ENCODE measurements at regions of chr1 and their contacts with region 1.

Region 1: GRCh38 chr1:248873409-248873992 is 14.6 kb upstream of the ZNF692 start:
- DNase-seq: peak; percentile 99
- H3K4me3 ChIP-seq: peak overlapping the region; percentile 49 to 81 (median 62)
- H3K27ac ChIP-seq: peak overlapping the region; percentile 76
- H3K4me1 ChIP-seq: no peaks in the 10 kb centered on the region
- H3K27me3 ChIP-seq: peaks cover 0 to 3% of the 10 kb centered on the region in 2 experiments
- CTCF ChIP-seq: peak in 1 of 2 donors; percentile 9
- POLR2A ChIP-seq: no peak

Region 2: DNA sequence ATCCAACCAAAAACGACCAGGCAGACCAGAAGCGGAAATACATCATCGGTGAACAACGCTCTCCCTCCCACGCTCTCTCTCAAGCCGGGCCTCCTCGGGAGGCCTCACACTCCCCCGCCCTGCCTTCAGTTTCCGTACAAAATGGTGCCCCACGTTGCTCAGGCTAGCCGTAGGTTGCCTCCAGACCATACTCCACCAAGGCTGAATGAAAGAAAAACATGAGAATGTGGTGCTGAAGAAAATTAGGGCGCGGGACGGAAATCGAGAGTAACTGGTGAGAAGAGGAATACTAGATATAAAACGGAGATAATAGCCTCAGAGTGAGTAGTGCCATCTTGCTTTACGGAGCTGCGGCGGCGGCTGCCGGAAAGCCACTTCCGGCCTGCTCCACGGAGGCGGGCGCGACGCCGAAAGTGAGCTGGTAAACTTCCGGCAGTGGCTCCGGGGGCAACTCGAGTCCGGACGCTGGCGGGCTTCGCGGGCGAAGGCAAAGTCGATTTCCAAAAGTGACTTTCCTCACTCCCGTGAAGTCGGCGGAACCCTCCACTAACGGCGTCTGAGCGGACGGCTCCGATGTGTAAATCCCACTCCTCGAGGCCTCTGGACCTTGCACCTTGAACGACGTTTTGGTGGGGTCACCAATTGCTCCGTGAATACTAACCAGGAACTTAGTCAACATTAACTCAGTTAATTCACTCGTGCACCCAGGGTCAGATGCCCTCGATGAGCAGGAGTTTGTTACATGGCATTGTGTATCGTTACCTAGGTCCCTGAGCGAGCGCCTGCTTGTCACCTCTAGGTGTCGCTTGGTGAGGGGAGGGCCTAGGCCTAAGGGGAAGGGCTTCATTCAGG is 47.4 kb before region 1 on chr1 and contains the start of gene SH3BP5L:
- CTCF ChIA-PET with region 1: interaction called, 5 read pairs
- POLR2A ChIA-PET with region 1: no interaction called
- dilution Hi-C with region 1: no loop called
- intact Hi-C with region 1: loop called (anchors 1 kb)
- DNase-seq: peak; percentile 96
- H3K4me3 ChIP-seq: peak within 1 kb of the TSS; percentile 51 to 78 (median 73)
- H3K27ac ChIP-seq: peak within 1 kb of the TSS; percentile 89
- H3K4me1 ChIP-seq: peaks cover 45% of the 10 kb centered on the region
- H3K27me3 ChIP-seq: no peaks in the 10 kb centered on the region
- CTCF ChIP-seq: peak; percentile 62 to 69
- POLR2A ChIP-seq: peak; percentile 59
- total RNA-seq, gene SH3BP5L: 24.7 and 26.5 TPM in 2 replicates

Region 3: GRCh38 chr1:248886237-248886895 is 12.9 kb after region 1 on chr1:
- CTCF ChIA-PET with region 1: no interaction called
- POLR2A ChIA-PET with region 1: no interaction called
- dilution Hi-C with region 1: no loop called
- intact Hi-C with region 1: no loop called
- DNase-seq: no peak
- H3K4me3 ChIP-seq: no peak overlapping the region
- H3K27ac ChIP-seq: no peak overlapping the region
- H3K4me1 ChIP-seq: no peaks in the 10 kb centered on the region
- H3K27me3 ChIP-seq: peaks cover 1 to 6% of the 10 kb centered on the region in 2 experiments
- CTCF ChIP-seq: no peak
- POLR2A ChIP-seq: no peak

Region 4: GRCh38 chr1:248914796-248915381 is 41.4 kb after region 1 on chr1:
- CTCF ChIA-PET with region 1: no interaction called
- POLR2A ChIA-PET with region 1: no interaction called
- dilution Hi-C with region 1: no loop called
- intact Hi-C with region 1: no loop called
- DNase-seq: no peak
- H3K4me3 ChIP-seq: no peak overlapping the region
- H3K27ac ChIP-seq: no peak overlapping the region
- H3K4me1 ChIP-seq: no peaks in the 10 kb centered on the region
- H3K27me3 ChIP-seq: no peaks in the 10 kb centered on the region
- CTCF ChIP-seq: no peak
- POLR2A ChIP-seq: no peak

Measured in endothelial cell of umbilical vein (primary cell).